Tibial artery (tissue), 4 donors: ENCODE measurements at regions of chr10 and their contacts with region 1.

Region 1: DNA sequence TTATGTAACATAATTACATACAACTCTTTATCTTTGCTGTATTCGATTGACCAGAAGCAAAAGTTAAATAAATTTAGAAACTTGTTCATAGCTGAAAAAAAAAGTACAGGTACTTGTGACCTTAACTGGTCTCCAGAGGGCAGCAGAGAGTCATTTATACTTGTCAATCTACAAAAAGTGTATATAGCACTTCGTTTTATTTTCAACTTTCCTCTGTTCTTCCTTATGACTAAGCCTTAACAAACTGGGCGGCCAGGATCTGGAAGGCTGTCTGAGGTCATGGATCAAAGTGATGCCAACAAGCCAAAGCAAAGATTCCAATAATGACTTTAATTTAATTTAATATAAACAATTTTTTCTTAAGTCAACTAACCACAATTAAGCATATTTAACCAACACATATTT is 29.8 kb downstream of the C10orf67 start:
- DNase-seq: peak in 1 of 2 donors; percentile 24
- H3K4me3 ChIP-seq: no peak overlapping the region
- H3K27ac ChIP-seq: no peak overlapping the region
- H3K4me1 ChIP-seq: no peaks in the 10 kb centered on the region
- H3K27me3 ChIP-seq: peaks cover 0 to 6% of the 10 kb centered on the region in 2 donors
- CTCF ChIP-seq: peak; percentile 59 to 77

Region 2: GRCh38 chr10:23171223-23171876 is 143.5 kb before region 1 on chr10:
- intact Hi-C with region 1: no loop called
- DNase-seq: no peak
- H3K4me3 ChIP-seq: no peak overlapping the region
- H3K27ac ChIP-seq: no peak overlapping the region
- H3K4me1 ChIP-seq: peaks cover 0 to 20% (median 15%) of the 10 kb centered on the region in 4 donors
- H3K27me3 ChIP-seq: peaks cover 0 to 57% of the 10 kb centered on the region in 2 donors
- CTCF ChIP-seq: no peak

Region 3: GRCh38 chr10:23530079-23530478 is 215.2 kb after region 1 on chr10:
- intact Hi-C with region 1: loop called (anchors 5 kb)
- DNase-seq: no peak
- H3K4me3 ChIP-seq: no peak overlapping the region
- H3K27ac ChIP-seq: no peak overlapping the region
- H3K4me1 ChIP-seq: no peaks in the 10 kb centered on the region
- H3K27me3 ChIP-seq: peaks cover 0 to 7% of the 10 kb centered on the region in 2 donors
- CTCF ChIP-seq: peak in 1 of 2 experiments; percentile 17